ENCODE measurements at regions of chr16 and their contacts with region 1.

Region 1: GRCh38 chr16:79278506-79278905 is 322.0 kb downstream of the MAF start:
- DNase-seq: peak; percentile 73 to 82 (median 80)
- H3K4me3 ChIP-seq: peak overlapping the region; percentile 6 to 23
- H3K4me3 Mint-ChIP-seq: peak overlapping the region; percentile 68 to 92 (median 82)
- H3K27ac ChIP-seq: peak overlapping the region; percentile 50
- H3K27ac Mint-ChIP-seq: peak overlapping the region; percentile 85 to 98 (median 97)
- H3K4me1 ChIP-seq: peaks cover 68% of the 10 kb centered on the region
- H3K4me1 Mint-ChIP-seq: peaks cover 50 to 87% (median 73%) of the 10 kb centered on the region in 4 donors
- H3K27me3 ChIP-seq: no peaks in the 10 kb centered on the region
- H3K27me3 Mint-ChIP-seq: no peaks in the 10 kb centered on the region

Region 2: GRCh38 chr16:78742501-78743283 is 535.8 kb before region 1 on chr16:
- CTCF ChIA-PET with region 1: no interaction called
- POLR2A ChIA-PET with region 1: no interaction called
- intact Hi-C with region 1: loop called (anchors 10 kb)
- DNase-seq: peak; percentile 73 to 91 (median 80)
- H3K4me3 ChIP-seq: peak overlapping the region; percentile 64 to 82
- H3K4me3 Mint-ChIP-seq: peak overlapping the region; percentile 81 to 90 (median 88)
- H3K27ac ChIP-seq: peak overlapping the region; percentile 81
- H3K27ac Mint-ChIP-seq: peak overlapping the region; percentile 93 to 99 (median 98)
- H3K4me1 ChIP-seq: peaks cover 33% of the 10 kb centered on the region
- H3K4me1 Mint-ChIP-seq: peaks cover 26 to 48% (median 30%) of the 10 kb centered on the region in 4 donors
- H3K27me3 ChIP-seq: no peaks in the 10 kb centered on the region
- H3K27me3 Mint-ChIP-seq: no peaks in the 10 kb centered on the region

Region 3: GRCh38 chr16:79261481-79261940 is 17.0 kb before region 1 on chr16:
- CTCF ChIA-PET with region 1: interaction called, 37 read pairs
- POLR2A ChIA-PET with region 1: interaction called, 146 read pairs
- intact Hi-C with region 1: no loop called
- DNase-seq: peak in 4 of 5 donors; percentile 43 to 51 (median 47)
- H3K4me3 ChIP-seq: no peak overlapping the region
- H3K4me3 Mint-ChIP-seq: no peak overlapping the region
- H3K27ac ChIP-seq: no peak overlapping the region
- H3K27ac Mint-ChIP-seq: peak overlapping the region in 3 of 7 donors; percentile 4 to 77 (median 23)
- H3K4me1 ChIP-seq: peaks cover 7% of the 10 kb centered on the region
- H3K4me1 Mint-ChIP-seq: peaks cover 8 to 43% (median 17%) of the 10 kb centered on the region in 4 donors
- H3K27me3 ChIP-seq: no peaks in the 10 kb centered on the region
- H3K27me3 Mint-ChIP-seq: no peaks in the 10 kb centered on the region

Region 4: GRCh38 chr16:79381552-79382042 is 103.1 kb after region 1 on chr16:
- CTCF ChIA-PET with region 1: interaction called, 4 read pairs
- POLR2A ChIA-PET with region 1: interaction called, 4 read pairs
- intact Hi-C with region 1: loop called (anchors 10 kb)
- DNase-seq: peak in 4 of 5 donors; percentile 24 to 39 (median 34)
- H3K4me3 ChIP-seq: peak overlapping the region in 1 of 2 donors; percentile 21
- H3K4me3 Mint-ChIP-seq: peak overlapping the region; percentile 67 to 85 (median 76)
- H3K27ac ChIP-seq: peak overlapping the region; percentile 16
- H3K27ac Mint-ChIP-seq: peak overlapping the region; percentile 71 to 95 (median 93)
- H3K4me1 ChIP-seq: peaks cover 34% of the 10 kb centered on the region
- H3K4me1 Mint-ChIP-seq: peaks cover 27 to 38% (median 33%) of the 10 kb centered on the region in 4 donors
- H3K27me3 ChIP-seq: no peaks in the 10 kb centered on the region
- H3K27me3 Mint-ChIP-seq: no peaks in the 10 kb centered on the region